GM12878 (cell line): ENCODE measurements at regions of chr1 and their contacts with region 1.

Region 1: DNA sequence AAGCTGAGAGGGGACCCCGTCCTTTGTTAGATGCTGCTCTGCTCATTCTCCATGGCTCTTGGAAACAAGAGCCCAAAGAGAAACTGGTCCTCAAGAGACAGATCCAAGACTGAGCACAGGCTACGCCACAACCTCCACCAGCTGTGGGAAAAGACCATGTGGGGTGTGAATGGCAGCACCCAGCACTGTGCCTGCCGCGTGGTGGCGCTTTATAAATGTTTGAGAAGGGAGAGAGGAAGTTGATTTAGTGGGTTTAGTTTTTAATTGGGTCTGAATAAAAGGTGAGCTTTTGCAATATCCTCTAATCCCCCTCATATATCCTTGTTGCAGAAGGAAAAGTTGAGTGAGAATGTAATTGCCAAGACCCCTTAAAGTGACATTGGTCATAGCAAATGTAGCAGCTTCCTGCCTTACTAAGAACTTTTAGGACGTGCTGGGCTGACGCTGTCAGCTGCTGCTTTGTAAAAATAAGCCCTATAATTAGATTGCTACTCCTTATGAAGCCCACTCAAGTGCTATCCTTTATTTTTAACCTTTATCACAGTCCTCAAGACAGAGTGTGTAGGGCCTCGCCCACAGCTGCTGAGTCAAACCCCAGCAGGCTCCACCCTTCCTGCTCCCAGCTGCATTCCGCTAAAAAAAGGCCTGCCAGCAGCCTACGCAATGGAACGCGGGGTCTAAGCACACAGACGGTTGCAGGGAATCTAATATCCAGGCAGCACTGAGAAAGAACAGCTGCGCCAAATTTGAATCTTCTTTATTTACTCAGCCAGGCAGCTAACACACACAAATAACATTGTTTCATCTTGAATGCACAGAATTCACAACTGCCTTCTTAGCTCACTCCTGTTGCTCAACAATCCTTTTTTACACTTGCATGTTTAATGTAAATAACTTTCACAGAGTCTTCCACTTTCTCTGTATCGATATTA is 47.4 kb upstream of the PRDX6 start:
- DNase-seq: no peak
- ATAC-seq: peak; percentile 92
- H3K4me3 ChIP-seq: no peak overlapping the region
- H3K27ac ChIP-seq: peak overlapping the region; percentile 7
- H3K4me1 ChIP-seq: peaks cover 19% of the 10 kb centered on the region
- H3K27me3 ChIP-seq: no peaks in the 10 kb centered on the region
- CTCF ChIP-seq: peak; percentile 64 to 76 (median 75)
- EP300 ChIP-seq: no peak
- POLR2A ChIP-seq: peak; percentile 17; the same call in 1 of the 2 replicates
- RAD21 ChIP-seq: peak; percentile 46

Region 2: GRCh38 chr1:173202430-173203145 is 227.1 kb before region 1 on chr1:
- CTCF ChIA-PET with region 1: interaction called, 24 read pairs
- POLR2A ChIA-PET with region 1: no interaction called
- RAD21 ChIA-PET with region 1: interaction called, 6 read pairs
- SMC1A ChIA-PET with region 1: interaction called, 27 read pairs
- in situ Hi-C with region 1: no loop called
- intact Hi-C with region 1: no loop called
- DNase-seq: no peak
- ATAC-seq: peak; percentile 54
- H3K4me3 ChIP-seq: no peak overlapping the region
- H3K27ac ChIP-seq: no peak overlapping the region
- H3K4me1 ChIP-seq: peaks cover 14% of the 10 kb centered on the region
- H3K27me3 ChIP-seq: no peaks in the 10 kb centered on the region
- CTCF ChIP-seq: peak; percentile 54 to 69 (median 62)
- EP300 ChIP-seq: no peak
- POLR2A ChIP-seq: no peak
- RAD21 ChIP-seq: peak; percentile 90

Region 3: DNA sequence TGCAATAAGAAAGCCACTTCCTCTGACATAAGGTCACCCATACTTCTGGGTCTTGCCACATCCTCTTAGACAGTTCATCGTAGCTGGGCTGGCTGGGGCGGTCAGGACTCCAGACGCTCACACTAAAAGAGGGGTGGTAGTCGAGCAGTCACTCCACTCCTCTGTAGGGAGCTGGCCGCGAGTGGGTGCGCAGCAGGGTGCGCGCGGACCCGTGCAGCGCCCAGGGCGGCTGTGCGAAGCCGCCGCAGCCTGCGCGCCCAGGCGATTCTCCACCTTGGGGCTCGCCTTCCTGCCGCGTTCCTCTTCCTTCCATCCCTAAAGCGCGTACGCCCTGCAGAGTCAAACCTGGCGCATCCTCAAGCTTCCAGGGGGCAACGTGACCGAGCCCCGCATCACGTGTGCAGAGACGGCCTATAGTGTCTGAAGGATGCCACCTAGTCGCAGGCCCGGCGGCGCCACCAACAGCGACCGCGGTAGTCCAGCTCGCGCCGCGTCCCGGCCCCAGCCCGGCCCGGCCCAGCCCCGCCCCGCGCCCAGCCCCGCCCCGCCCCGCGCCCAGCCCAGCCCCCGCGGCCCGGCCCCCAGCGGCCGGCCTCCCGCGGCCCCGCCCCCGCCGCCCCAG is 47.0 kb after region 1 on chr1:
- CTCF ChIA-PET with region 1: interaction called, 12 read pairs
- POLR2A ChIA-PET with region 1: interaction called, 5 read pairs
- RAD21 ChIA-PET with region 1: interaction called, 15 read pairs
- SMC1A ChIA-PET with region 1: interaction called, 8 read pairs
- in situ Hi-C with region 1: no loop called
- intact Hi-C with region 1: loop called (anchors 2 kb)
- DNase-seq: peak; percentile 61
- ATAC-seq: peak; percentile 94
- H3K4me3 ChIP-seq: peak overlapping the region; percentile 78
- H3K27ac ChIP-seq: peak overlapping the region; percentile 86
- H3K4me1 ChIP-seq: peaks cover 8% of the 10 kb centered on the region
- H3K27me3 ChIP-seq: no peaks in the 10 kb centered on the region
- CTCF ChIP-seq: peak in 1 of 3 experiments; percentile 26; a peak in 1 of 6 replicates
- EP300 ChIP-seq: no peak
- POLR2A ChIP-seq: peak; percentile 86
- RAD21 ChIP-seq: no peak

Region 4: GRCh38 chr1:173562813-173563212 is 133.1 kb after region 1 on chr1:
- CTCF ChIA-PET with region 1: no interaction called
- POLR2A ChIA-PET with region 1: no interaction called
- RAD21 ChIA-PET with region 1: no interaction called
- SMC1A ChIA-PET with region 1: no interaction called
- in situ Hi-C with region 1: no loop called
- intact Hi-C with region 1: no loop called
- DNase-seq: no peak
- ATAC-seq: no peak
- H3K4me3 ChIP-seq: no peak overlapping the region
- H3K27ac ChIP-seq: no peak overlapping the region
- H3K4me1 ChIP-seq: no peaks in the 10 kb centered on the region
- H3K27me3 ChIP-seq: no peaks in the 10 kb centered on the region
- CTCF ChIP-seq: no peak
- EP300 ChIP-seq: no peak
- POLR2A ChIP-seq: no peak
- RAD21 ChIP-seq: no peak

Region 5: DNA sequence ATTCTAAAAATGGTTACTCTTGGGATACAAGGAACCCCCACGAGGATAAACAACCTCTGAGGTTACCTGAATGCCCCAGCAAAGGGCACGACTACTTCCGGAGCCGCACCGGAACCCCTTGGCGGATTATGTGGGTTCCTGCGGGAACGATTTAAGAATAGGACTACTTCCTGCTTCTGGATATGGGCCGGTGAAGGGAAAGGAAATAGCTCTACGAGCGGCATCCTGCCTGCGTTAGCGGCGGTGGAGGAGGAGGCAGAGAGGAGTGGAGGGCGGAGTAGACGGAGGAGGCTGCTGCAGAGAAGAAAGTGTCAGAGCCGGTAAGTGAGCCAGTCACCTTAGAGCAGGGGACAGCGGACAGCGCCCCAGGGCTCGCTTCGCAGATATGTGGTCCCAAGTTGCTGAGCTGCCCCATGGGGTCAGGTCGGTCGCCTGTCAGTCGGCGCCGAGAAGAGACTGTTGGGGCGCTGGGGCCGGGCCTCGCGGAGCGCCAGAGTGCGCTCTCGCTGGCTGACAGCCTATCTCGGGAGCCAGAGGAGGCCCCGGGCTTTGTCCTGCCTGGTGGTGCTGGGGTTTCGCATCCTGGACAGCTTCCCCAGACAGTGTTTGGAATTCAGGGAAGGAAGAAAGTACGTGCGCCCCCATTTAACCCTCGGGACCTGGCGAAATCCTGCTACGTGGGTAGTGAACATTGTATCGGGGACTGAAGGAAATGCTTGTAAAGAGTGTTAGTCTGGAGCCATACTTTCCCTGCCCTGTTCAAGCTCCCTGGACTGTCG is 285.2 kb after region 1 on chr1 and contains the start of gene KLHL20:
- CTCF ChIA-PET with region 1: interaction called, 11 read pairs
- POLR2A ChIA-PET with region 1: no interaction called
- RAD21 ChIA-PET with region 1: interaction called, 9 read pairs
- SMC1A ChIA-PET with region 1: interaction called, 4 read pairs
- in situ Hi-C with region 1: no loop called
- intact Hi-C with region 1: loop called (anchors 10 kb)
- DNase-seq: peak; percentile 73
- ATAC-seq: peak; percentile 98
- H3K4me3 ChIP-seq: peak within 1 kb of the TSS; percentile 92
- H3K27ac ChIP-seq: peak within 1 kb of the TSS; percentile 71
- H3K4me1 ChIP-seq: peaks cover 3% of the 10 kb centered on the region; the same call in 1 of the 2 replicates
- H3K27me3 ChIP-seq: no peaks in the 10 kb centered on the region
- CTCF ChIP-seq: no peak; a peak in 1 of 6 replicates
- EP300 ChIP-seq: no peak; a peak in 1 of 4 replicates
- POLR2A ChIP-seq: peak; percentile 90
- RAD21 ChIP-seq: 0 out of 2 replicates have a peak, but pooled peaks have one; percentile 10
- polyA plus RNA-seq, gene KLHL20: 3.8 to 5.8 TPM

Region 6: DNA sequence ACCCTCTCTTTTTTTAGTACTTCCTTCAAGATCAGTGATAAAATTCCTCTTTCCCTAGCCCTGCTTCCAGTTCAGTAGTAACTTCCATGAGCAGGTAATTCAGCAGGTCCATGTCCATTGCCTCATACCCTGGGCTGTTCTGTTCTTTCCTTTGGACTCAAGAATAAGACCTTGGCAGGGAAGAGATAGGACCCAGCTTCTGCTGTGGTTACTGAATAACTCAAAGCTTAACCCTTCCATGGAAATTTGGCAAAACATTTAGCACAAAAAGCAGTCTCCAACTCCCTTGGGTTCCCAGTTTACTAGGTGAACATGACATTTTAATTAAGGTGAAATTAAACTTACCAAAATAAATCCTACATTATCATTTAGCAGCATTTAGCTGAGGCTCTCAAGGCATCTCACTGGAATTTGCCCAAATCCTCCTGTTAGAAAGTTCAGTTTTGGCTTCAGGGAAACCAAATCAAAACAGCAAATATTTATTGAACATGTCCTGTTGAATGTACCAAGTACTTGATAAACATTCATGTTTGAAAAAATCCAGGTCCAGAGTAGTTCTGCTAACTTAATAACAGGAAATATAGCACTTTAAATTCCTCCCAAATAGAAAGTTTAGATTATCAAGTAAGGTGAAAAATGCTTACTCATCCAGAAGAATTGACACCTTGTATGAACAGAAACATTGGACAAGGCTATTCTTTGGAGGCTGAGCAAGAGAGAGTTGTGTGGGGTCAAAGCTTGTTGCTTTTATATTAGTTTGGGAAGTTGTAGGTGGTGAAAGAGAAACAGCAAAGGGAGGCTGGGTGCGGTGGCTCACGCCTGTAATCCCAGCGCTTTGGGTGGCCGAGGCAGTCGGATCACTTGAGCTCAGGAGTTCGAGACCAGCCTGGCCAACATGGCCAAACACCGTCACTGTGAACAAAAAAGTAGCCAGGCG is 495.8 kb after region 1 on chr1:
- CTCF ChIA-PET with region 1: no interaction called
- POLR2A ChIA-PET with region 1: no interaction called
- RAD21 ChIA-PET with region 1: no interaction called
- SMC1A ChIA-PET with region 1: no interaction called
- in situ Hi-C with region 1: no loop called
- intact Hi-C with region 1: loop called (anchors 10 kb)
- DNase-seq: no peak
- ATAC-seq: no peak
- H3K4me3 ChIP-seq: no peak overlapping the region
- H3K27ac ChIP-seq: no peak overlapping the region
- H3K4me1 ChIP-seq: no peaks in the 10 kb centered on the region
- H3K27me3 ChIP-seq: no peaks in the 10 kb centered on the region
- CTCF ChIP-seq: no peak
- EP300 ChIP-seq: no peak
- POLR2A ChIP-seq: no peak
- RAD21 ChIP-seq: no peak

Region 7: DNA sequence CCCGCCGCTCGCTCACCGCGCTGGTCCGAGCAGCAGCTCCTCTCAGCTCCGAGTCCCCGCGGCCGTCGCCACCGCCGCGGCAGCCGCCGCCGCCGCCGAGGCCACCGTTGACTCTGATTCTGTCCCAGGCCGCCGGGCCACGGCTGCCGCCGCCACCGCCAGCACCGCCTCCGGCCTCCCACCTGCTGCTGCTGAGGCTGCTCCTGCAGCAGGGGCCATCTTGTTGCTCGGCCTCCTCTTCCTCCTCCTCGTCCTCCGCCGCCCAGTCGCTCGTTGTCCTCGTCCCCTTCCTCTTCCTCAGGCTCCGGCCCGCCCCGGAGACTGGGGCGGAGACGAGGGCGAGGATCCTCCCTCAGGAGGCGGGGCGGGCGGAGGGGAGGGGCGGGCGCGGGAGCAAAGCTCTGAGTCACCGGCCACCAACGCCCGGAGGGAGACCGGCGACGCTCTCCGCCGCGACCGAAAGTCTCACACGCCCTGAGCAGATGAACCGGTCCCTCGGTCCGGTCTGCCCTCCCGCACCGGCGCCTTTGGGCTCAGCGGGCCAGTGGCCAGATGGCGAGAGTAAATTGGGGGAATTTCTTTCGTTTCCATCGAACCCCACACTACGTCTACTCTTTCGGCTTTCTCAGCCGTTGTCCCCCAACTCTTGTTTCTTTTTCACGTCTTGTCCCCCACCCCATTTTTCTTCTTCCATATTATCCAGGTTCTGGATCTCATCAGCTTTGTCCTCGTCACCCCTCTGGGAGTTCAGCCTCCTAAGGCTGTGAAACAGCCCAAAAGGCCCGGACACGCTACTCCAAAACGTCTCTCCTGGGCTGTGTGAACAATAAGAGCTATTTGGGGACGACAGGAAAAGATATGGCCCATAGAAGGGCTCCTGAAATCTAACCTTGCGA is 592.6 kb after region 1 on chr1 and contains the start of gene RC3H1:
- CTCF ChIA-PET with region 1: no interaction called
- POLR2A ChIA-PET with region 1: no interaction called
- RAD21 ChIA-PET with region 1: no interaction called
- SMC1A ChIA-PET with region 1: no interaction called
- in situ Hi-C with region 1: no loop called
- intact Hi-C with region 1: no loop called
- DNase-seq: peak; percentile 53
- ATAC-seq: peak; percentile 90
- H3K4me3 ChIP-seq: peak within 1 kb of the TSS; percentile 99
- H3K27ac ChIP-seq: peak within 1 kb of the TSS; percentile 88
- H3K4me1 ChIP-seq: peaks cover 5% of the 10 kb centered on the region
- H3K27me3 ChIP-seq: no peaks in the 10 kb centered on the region
- CTCF ChIP-seq: no peak
- EP300 ChIP-seq: 0 out of 4 replicates have a peak, but pooled peaks of 1 of the 2 experiments have one; percentile 15
- POLR2A ChIP-seq: peak; percentile 97
- RAD21 ChIP-seq: no peak
- polyA plus RNA-seq, gene RC3H1: 1.4 to 3.2 TPM

Region 8: GRCh38 chr1:174217787-174218574 is 788.2 kb after region 1 on chr1:
- CTCF ChIA-PET with region 1: interaction called, 33 read pairs
- POLR2A ChIA-PET with region 1: no interaction called
- RAD21 ChIA-PET with region 1: interaction called, 22 read pairs
- SMC1A ChIA-PET with region 1: interaction called, 14 read pairs
- in situ Hi-C with region 1: loop called (anchors 25 kb)
- intact Hi-C with region 1: loop called (anchors 2 kb)
- DNase-seq: no peak
- ATAC-seq: peak; percentile 79
- H3K4me3 ChIP-seq: no peak overlapping the region
- H3K27ac ChIP-seq: peak overlapping the region; percentile 36
- H3K4me1 ChIP-seq: peaks cover 38% of the 10 kb centered on the region
- H3K27me3 ChIP-seq: no peaks in the 10 kb centered on the region
- CTCF ChIP-seq: peak; percentile 64 to 79 (median 76); a peak in 5 of 6 replicates
- EP300 ChIP-seq: no peak
- POLR2A ChIP-seq: no peak
- RAD21 ChIP-seq: peak; percentile 86